Mammary epithelial cell (primary cell): ENCODE measurements at regions of chr2 and their contacts with region 1.

Region 1: GRCh38 chr2:189347540-189347939 is 93.7 kb upstream of the WDR75 start:
- DNase-seq: peak; percentile 80
- H3K4me3 ChIP-seq: no peak overlapping the region
- H3K27ac ChIP-seq: peak overlapping the region; percentile 67
- H3K4me1 ChIP-seq: peaks cover 11% of the 10 kb centered on the region
- H3K27me3 ChIP-seq: no peaks in the 10 kb centered on the region
- CTCF ChIP-seq: peak in 1 of 2 donors; percentile 47

Region 2: GRCh38 chr2:188983427-188984064 is 364.0 kb before region 1 on chr2:
- CTCF ChIA-PET with region 1: no interaction called
- dilution Hi-C with region 1: no loop called
- in situ Hi-C with region 1: no loop called
- intact Hi-C with region 1: loop called (anchors 5 kb)
- DNase-seq: no peak
- H3K4me3 ChIP-seq: no peak overlapping the region
- H3K27ac ChIP-seq: no peak overlapping the region
- H3K4me1 ChIP-seq: no peaks in the 10 kb centered on the region
- H3K27me3 ChIP-seq: no peaks in the 10 kb centered on the region
- CTCF ChIP-seq: peak; percentile 36 to 39

Region 3: DNA sequence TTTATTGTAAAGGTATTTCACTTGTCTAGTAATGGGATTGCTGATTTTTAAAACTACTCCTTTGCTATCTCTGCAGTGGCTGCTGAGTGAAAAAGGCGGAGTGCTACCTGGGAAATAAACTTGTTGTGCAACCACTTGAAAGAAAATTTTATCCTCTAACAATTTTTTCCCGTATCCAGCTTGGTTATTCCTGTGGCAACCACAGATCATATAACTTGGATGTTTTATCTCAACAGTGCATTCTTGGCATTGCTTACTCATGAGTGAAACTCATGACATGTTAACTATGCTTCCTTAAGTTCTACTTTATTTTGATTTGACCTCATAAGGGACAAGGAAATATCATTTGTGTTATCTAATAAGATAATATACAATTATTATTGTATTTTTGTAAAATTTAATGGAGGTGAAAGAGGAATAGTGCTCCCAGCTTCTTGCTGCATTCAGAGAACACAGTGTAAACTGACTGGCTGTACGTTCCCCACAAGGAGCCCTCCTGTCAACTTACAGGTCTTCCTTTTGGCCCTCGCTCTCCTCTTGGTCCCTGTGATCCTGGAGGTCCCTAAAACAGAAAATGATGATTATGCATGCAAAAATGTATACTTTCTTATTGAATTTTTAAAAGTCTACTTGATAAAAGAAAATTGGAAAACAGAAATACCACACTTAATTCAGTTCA is 250.6 kb before region 1 on chr2:
- CTCF ChIA-PET with region 1: no interaction called
- dilution Hi-C with region 1: no loop called
- in situ Hi-C with region 1: no loop called
- intact Hi-C with region 1: loop called (anchors 1 kb)
- DNase-seq: peak; percentile 60
- H3K4me3 ChIP-seq: no peak overlapping the region
- H3K27ac ChIP-seq: no peak overlapping the region
- H3K4me1 ChIP-seq: peaks cover 6% of the 10 kb centered on the region
- H3K27me3 ChIP-seq: no peaks in the 10 kb centered on the region
- CTCF ChIP-seq: no peak

Region 4: DNA sequence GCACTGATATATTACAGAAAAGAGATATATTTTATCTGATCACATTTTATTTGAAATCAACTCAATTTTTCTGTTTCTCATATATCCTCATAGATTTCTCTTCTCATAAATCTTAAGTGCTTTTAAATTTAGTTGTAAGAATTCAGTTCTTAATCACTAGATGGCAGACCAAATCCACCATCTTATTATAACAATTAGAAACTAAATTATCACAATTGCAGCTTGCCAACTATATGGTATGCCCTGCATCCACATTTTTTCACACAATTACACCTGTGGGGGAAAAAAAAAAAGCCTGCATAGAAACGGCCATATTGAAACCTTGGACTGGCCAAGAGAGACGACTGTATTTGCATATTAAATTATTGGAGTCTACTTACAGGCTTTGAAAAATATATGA is 232.4 kb before region 1 on chr2:
- CTCF ChIA-PET with region 1: no interaction called
- dilution Hi-C with region 1: no loop called
- in situ Hi-C with region 1: no loop called
- intact Hi-C with region 1: loop called (anchors 1 kb)
- DNase-seq: no peak
- H3K4me3 ChIP-seq: no peak overlapping the region
- H3K27ac ChIP-seq: no peak overlapping the region
- H3K4me1 ChIP-seq: no peaks in the 10 kb centered on the region
- H3K27me3 ChIP-seq: no peaks in the 10 kb centered on the region
- CTCF ChIP-seq: peak in 1 of 2 donors; percentile 23

Region 5: GRCh38 chr2:189142893-189143759 is 204.4 kb before region 1 on chr2:
- CTCF ChIA-PET with region 1: no interaction called
- dilution Hi-C with region 1: no loop called
- in situ Hi-C with region 1: no loop called
- intact Hi-C with region 1: loop called (anchors 1 kb)
- DNase-seq: peak; percentile 52
- H3K4me3 ChIP-seq: no peak overlapping the region
- H3K27ac ChIP-seq: no peak overlapping the region
- H3K4me1 ChIP-seq: no peaks in the 10 kb centered on the region
- H3K27me3 ChIP-seq: no peaks in the 10 kb centered on the region
- CTCF ChIP-seq: peak; percentile 96 to 98